ENCODE measurements at regions of chr18 and their contacts with region 1.

Region 1: DNA sequence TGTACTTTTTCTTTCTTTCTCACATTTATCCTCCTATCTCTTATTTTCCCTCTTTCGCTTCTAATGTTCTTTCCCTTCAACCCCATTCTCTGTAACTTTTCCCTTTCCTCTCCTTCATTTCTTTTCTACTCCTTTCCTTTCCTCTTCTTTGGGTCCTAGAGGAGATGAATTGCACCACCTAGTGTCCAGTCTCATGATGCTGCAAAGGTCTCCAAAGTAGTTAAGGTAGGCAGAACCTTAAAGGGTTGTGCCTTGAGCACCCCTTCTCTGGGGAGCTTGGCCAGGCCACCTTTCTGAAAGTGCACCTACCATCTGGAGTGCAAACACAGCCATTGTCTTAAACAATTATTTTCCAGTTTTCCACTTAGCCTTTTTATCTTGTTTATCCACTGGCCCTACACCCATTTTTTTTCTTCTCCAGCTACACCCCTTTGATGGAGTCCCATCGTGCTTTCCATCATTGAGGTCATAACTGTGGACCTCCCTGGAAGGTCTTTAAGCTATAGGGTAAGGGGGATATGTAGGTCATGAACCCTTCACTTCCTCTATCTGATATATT is 156.0 kb downstream of the ESCO1 start:
- DNase-seq: peak in 1 of 3 donors; percentile 49
- ATAC-seq: peak; percentile 79 to 90 (median 89)
- H3K4me3 ChIP-seq: no peak overlapping the region
- H3K27ac ChIP-seq: no peak overlapping the region
- H3K4me1 ChIP-seq: no peaks in the 10 kb centered on the region
- H3K27me3 ChIP-seq: no peaks in the 10 kb centered on the region
- CTCF ChIP-seq: peak; percentile 71 to 79 (median 74)
- POLR2A ChIP-seq: no peak

Region 2: DNA sequence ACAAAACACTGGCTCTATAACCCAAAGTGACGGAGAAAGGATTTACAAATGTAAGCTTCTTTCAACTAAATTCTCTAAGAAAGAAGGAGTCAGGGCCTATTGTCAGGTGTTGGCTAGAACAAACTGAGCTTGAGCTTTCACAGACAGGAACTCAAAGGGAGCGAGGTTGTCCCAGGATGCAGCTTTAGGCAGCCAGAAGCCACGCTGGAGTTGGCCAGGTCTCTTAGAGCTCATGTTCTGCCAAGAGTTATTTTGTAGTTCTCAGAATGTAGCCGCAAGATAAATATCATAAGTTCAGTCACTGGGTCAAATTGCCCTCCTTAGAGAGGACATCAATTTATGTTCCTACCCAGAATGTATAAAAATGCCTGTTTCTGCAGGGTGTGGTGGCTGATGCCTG is 256.7 kb before region 1 on chr18:
- intact Hi-C with region 1: loop called in 1 of 2 experiments (anchors 5 kb)
- DNase-seq: no peak
- ATAC-seq: no peak
- H3K4me3 ChIP-seq: no peak overlapping the region
- H3K27ac ChIP-seq: no peak overlapping the region
- H3K4me1 ChIP-seq: no peaks in the 10 kb centered on the region
- H3K27me3 ChIP-seq: no peaks in the 10 kb centered on the region
- CTCF ChIP-seq: no peak
- POLR2A ChIP-seq: no peak

Region 3: GRCh38 chr18:21496277-21496835 is 51.8 kb after region 1 on chr18:
- intact Hi-C with region 1: no loop called
- DNase-seq: no peak
- ATAC-seq: no peak
- H3K4me3 ChIP-seq: no peak overlapping the region
- H3K27ac ChIP-seq: no peak overlapping the region
- H3K4me1 ChIP-seq: no peaks in the 10 kb centered on the region
- H3K27me3 ChIP-seq: no peaks in the 10 kb centered on the region
- CTCF ChIP-seq: no peak
- POLR2A ChIP-seq: no peak

Region 4: DNA sequence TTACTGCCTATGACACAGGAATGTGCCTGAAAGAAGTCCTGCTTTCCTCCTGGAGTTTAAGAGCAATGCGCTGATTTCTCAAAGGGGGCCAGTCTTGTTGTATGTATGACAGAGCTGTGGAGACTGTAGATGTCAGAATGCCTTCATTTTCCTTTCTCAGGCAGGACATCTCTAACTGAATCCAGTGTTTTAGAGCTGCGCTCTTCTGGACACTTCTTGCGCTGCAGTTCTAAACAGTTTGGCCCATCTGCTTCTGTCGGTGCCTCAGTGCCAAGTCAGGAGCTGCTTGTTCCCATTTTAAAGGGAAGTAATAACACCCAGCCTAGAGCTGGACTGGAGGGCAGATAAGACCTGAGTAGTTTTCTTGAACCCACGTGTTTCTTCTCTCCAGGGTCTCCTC is 64.5 kb after region 1 on chr18:
- intact Hi-C with region 1: no loop called
- DNase-seq: no peak
- ATAC-seq: peak in 1 of 4 donors; percentile 35
- H3K4me3 ChIP-seq: no peak overlapping the region
- H3K27ac ChIP-seq: no peak overlapping the region
- H3K4me1 ChIP-seq: no peaks in the 10 kb centered on the region
- H3K27me3 ChIP-seq: no peaks in the 10 kb centered on the region
- CTCF ChIP-seq: no peak
- POLR2A ChIP-seq: no peak

Region 5: DNA sequence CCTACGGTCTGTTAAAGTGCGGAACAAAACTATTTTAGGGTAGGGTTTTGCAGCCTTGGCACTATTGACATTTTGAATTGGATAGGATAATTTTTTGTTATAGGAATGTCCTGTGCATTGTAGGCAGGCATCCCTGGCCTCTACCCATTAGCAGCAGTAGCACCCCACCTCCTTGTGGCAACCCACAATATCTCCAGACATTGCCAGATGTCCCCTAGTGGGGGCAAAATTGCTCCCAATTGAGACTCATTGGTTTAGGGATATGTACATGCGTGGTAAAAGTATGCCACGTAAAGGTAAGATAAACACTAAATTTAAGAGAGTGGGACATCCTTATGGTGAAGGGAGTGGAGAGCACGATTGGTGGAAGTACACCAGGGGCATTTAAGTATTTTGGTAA is 300.7 kb after region 1 on chr18:
- intact Hi-C with region 1: no loop called
- DNase-seq: no peak
- ATAC-seq: no peak
- H3K4me3 ChIP-seq: no peak overlapping the region
- H3K27ac ChIP-seq: no peak overlapping the region
- H3K4me1 ChIP-seq: peaks cover 0 to under 1% (median 0%) of the 10 kb centered on the region in 4 donors
- H3K27me3 ChIP-seq: no peaks in the 10 kb centered on the region
- CTCF ChIP-seq: no peak
- POLR2A ChIP-seq: no peak